ENCODE measurements at regions of chr9 and their contacts with region 1.

Region 1: GRCh38 chr9:136700959-136701667 is 11.3 kb upstream of the DIPK1B start:
- DNase-seq: peak; percentile 78 to 96 (median 95)
- H3K4me3 ChIP-seq: peak overlapping the region in 5 of 7 experiments; percentile 22 to 63 (median 46)
- H3K27ac ChIP-seq: peak overlapping the region; percentile 64 to 84
- H3K4me1 ChIP-seq: peaks cover 2 to 83% (median 75%) of the 10 kb centered on the region in 4 experiments
- H3K27me3 ChIP-seq: no peaks in the 10 kb centered on the region

Region 2: DNA sequence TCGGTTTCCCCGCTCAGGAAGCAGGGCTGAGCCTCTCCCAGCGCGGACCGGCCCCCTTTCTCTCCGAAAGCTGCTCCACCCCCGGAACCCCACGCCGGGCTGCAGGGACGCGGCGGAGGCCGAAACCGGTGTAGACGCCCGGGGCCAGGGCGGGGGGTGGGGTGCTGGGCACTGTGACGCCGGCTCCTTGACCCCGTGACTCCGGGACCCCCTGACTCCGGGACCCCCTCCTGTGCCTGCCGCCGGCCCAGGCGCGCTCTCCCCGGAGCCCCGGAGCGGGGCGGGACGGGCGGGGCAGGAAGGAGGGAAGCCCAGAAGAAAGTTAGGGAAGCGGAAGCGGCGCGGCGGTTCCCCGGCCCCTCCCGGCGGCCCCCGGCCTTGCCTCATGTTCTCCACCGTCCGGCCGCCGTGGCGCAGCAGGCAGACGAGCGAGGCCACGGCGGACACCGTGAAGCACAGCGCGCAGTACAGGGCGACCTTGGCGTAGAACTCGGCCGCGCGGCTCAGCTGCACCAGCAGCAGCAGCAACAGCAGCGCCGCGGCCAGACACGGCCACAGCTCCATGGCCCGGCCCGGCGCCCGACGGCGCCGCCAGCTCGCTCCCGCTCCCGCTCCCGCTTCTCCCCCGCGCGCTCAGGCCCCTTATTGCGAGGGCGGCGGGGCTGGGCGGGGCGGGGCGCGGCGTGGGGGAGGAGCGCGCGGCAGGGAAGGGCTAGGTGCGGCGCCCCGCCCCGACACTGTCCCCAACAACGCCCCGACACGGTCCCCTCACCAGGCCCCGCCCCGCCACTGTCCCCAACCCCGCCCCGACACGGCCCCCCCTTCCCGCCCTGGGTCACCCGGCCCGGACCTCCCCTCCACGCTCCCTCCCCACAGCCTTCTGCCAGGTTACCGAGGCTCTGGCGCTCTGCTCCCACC is 14.1 kb before region 1 on chr9 and contains the start of gene AGPAT2:
- CTCF ChIA-PET with region 1: interaction called, 22 read pairs
- POLR2A ChIA-PET with region 1: interaction called, 8 read pairs
- DNase-seq: peak; percentile 65 to 76 (median 73)
- H3K4me3 ChIP-seq: peak within 1 kb of the TSS; percentile 48 to 85 (median 78)
- H3K27ac ChIP-seq: peak within 1 kb of the TSS in 1 of 2 experiments; percentile 71
- H3K4me1 ChIP-seq: peaks cover 0 to 40% (median 31%) of the 10 kb centered on the region in 4 experiments
- H3K27me3 ChIP-seq: no peaks in the 10 kb centered on the region

Region 3: DNA sequence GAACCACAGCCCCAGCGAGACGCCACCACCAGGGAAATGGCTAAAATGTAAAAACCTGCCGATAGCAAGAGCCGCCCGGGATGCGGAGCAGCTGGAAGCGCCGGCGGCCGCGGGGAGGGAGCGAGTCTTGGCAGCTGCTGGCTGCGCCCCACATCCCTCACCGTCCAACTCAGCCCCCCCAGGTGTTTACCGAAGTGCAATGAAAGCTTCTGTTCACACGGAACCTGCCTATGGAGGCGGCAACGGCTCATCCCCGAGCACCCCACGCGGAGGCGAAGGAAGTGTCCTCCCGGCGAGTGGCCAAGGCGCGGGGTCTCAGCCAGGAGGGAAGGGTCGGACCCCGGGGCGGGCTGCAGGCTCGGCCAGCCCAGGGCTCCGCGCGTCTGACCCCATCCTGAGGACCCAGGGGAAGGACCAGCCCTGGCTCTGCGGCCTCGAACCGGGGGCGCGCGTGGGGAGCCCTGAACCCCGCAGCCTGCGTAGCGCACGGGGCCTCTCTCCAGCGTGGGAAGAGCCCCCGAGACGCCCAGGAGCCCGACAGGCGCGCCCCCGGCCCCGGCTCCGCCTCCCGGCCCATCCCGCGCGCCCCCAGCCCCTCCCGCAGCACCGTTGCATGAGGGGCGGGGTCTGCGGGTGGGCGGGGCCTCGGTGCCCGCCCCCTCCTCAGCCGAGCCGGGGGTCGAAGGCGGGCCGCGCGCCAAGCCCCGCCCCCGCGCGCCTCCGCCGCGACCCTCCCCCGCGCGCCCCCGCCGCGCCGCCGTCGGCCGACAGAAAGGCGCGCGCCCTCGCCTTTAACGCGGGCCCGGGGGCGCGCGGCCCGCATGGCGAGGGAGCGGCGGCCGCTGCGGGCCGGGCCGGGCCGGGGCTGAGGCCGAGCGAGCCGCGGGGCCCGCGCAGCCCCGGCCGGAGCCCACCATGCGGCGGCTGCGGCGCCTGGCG is 10.9 kb after region 1 on chr9 and contains the start of gene DIPK1B:
- CTCF ChIA-PET with region 1: interaction called, 27 read pairs
- POLR2A ChIA-PET with region 1: interaction called, 99 read pairs
- DNase-seq: peak; percentile 58 to 87 (median 78)
- H3K4me3 ChIP-seq: peak within 1 kb of the TSS; percentile 60 to 91 (median 78)
- H3K27ac ChIP-seq: peak within 1 kb of the TSS; percentile 70 to 83
- H3K4me1 ChIP-seq: peaks cover 0 to 50% (median 47%) of the 10 kb centered on the region in 4 experiments
- H3K27me3 ChIP-seq: no peaks in the 10 kb centered on the region

Region 4: DNA sequence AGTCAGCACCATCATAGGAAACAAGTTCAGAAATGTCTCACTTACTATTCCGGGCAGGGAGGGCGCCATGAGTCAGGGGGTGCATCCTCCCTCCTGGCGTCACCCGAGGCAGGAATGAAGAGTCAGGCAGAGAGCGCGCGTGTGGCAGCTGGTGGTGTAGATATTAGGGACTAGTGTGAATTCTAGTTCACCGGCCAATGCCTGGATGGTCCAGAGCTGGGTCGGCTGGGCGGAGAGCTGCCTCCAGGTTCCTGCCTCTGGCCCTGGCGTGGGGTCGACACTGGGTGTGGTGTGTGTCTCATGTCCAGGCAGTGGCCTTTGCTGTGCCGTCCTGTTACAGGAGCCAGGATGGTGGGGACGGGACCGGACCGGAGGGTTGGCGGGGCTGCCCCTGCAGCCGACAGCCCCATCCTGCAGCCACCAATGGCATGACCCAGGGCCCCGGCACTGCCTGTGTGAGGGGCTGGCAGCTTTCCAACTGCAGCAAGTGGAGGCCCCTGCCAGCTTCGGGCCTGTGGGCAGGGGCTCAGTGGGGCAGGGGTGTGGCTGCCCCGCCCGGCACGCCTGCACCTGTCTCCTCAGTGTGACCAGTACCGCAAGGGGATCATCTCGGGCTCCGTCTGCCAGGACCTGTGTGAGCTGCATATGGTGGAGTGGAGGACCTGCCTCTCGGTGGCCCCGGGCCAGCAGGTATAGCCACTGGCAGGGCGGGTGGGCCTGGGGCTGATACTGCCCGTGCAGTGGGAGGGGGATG is 20.4 kb after region 1 on chr9:
- CTCF ChIA-PET with region 1: interaction called, 14 read pairs
- POLR2A ChIA-PET with region 1: interaction called, 44 read pairs
- DNase-seq: no peak
- H3K4me3 ChIP-seq: no peak overlapping the region
- H3K27ac ChIP-seq: no peak overlapping the region
- H3K4me1 ChIP-seq: peaks cover 0 to 62% (median 53%) of the 10 kb centered on the region in 4 experiments
- H3K27me3 ChIP-seq: no peaks in the 10 kb centered on the region